Breast epithelium (tissue), 4 donors: ENCODE measurements at regions of chr7 and their contacts with region 1.

Region 1: DNA sequence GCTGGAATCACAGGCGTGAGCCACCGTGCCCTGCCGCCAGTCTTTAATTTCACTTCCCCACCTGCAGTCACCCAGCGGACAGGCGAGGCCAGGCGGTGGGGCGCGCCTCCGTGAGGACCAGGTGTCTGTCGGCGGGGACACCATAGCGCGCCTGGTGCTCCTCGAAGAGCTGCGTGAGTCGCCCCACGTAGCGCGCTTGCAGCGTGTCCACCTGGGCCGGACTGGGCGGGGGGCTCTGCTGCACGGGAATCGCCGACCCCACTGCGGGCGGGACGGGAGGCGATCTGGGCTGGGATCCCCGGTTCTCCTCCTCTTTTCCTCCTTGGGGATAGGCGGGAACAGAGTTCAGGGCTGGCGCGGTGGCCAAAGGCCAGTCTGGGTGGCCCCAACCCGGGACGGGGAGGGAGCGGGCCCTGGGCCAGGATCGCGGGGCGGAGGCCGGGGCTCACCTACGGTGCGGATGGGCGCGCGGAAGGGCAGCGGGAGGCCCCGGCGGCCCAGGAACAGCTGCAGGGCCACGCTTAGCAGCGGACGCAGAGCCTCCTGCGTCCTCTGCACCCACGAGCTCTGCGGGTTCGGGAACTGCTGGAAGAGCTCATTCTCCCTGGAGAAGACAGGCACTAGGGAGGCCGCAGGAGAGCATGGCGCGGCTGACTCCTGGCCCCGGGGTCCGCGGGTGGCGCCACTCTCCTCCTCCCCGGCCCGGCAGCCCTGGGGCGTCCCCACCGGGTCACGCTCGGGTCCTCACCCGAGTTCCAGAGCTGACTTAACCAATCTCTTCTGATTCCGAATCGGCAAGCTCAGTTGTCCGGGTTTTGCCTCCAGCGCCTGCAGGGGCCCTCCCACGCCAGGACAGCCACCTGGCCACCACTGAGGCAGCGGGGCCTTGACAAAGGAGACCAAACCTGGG is 1.1 kb upstream of the MOGAT3 start:
- DNase-seq: no peak
- H3K4me3 ChIP-seq: peak overlapping the region in 2 of 3 donors; percentile 33 to 59
- H3K27ac ChIP-seq: no peak overlapping the region
- H3K4me1 ChIP-seq: no peaks in the 10 kb centered on the region
- H3K27me3 ChIP-seq: peaks cover 0 to 41% of the 10 kb centered on the region in 2 donors
- CTCF ChIP-seq: no peak
- POLR2A ChIP-seq: no peak

Region 2: DNA sequence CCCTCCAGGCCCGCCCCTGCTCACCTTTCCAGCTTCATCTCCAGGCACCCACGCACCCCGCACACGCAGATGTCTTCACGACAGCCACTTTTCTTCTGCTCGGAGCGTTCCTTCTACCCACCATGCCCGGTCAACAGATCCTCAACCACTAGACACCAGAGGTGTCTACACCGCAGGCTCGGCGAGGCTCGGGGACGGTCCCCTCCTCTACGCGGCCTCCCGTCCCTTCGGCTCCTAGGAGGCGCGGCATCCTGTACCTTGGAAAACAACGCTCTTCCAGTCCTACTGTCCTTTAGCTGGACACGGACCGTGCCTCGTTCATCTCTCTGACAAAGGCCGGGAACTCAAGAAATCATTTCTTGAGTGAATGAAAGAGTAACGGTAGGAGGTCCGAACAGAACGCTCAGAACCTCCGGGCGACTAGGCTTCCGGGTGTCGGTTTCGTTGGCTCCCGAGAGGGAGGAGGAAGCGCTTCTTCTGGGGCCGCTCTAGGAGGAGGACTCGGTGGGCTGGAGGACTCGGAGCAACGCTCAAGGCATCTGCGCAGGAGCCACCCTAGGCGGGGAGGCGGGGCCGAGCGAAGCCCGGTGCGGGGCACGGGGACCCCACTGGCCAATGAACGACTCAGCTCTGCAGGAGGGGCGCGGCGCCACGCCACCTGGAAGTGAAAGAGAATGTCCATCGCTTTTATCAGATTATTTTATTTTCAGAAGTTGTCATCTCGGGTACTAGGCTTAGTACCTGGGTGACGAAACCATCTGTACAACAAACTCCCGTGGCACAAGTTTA is 50.1 kb after region 1 on chr7:
- intact Hi-C with region 1: loop called (anchors 10 kb)
- DNase-seq: peak; percentile 94 to 97
- H3K4me3 ChIP-seq: peak overlapping the region; percentile 73 to 90 (median 80)
- H3K27ac ChIP-seq: peak overlapping the region; percentile 16 to 77
- H3K4me1 ChIP-seq: peaks cover 0 to 4% of the 10 kb centered on the region in 2 donors
- H3K27me3 ChIP-seq: no peaks in the 10 kb centered on the region
- CTCF ChIP-seq: no peak
- POLR2A ChIP-seq: peak; percentile 16

Region 3: GRCh38 chr7:103127006-103127405 is 1925.1 kb after region 1 on chr7:
- intact Hi-C with region 1: no loop called
- DNase-seq: no peak
- H3K4me3 ChIP-seq: no peak overlapping the region
- H3K27ac ChIP-seq: no peak overlapping the region
- H3K4me1 ChIP-seq: no peaks in the 10 kb centered on the region
- H3K27me3 ChIP-seq: no peaks in the 10 kb centered on the region
- CTCF ChIP-seq: no peak
- POLR2A ChIP-seq: no peak